Heart right ventricle (tissue), 16 donors: ENCODE measurements at regions of chr4 and their contacts with region 1.

Region 1: GRCh38 chr4:139665690-139666529 is at the start of gene MGST2:
- DNase-seq: peak; percentile 80 to 85
- ATAC-seq: peak; percentile 87 to 96 (median 94)
- H3K4me3 ChIP-seq: peak within 1 kb of the TSS; percentile 27 to 68 (median 58)
- H3K27ac ChIP-seq: peak within 1 kb of the TSS; percentile 74 to 95 (median 92)
- H3K4me1 ChIP-seq: peaks cover 0 to 70% (median 46%) of the 10 kb centered on the region in 9 donors
- H3K27me3 ChIP-seq: no peaks in the 10 kb centered on the region
- CTCF ChIP-seq: peak in 1 of 9 donors; percentile 7
- total RNA-seq, gene MGST2: 99.1 to 125 (median 107) TPM

Region 2: GRCh38 chr4:139511320-139511719 is 154.6 kb before region 1 on chr4:
- intact Hi-C with region 1: no loop called
- DNase-seq: no peak
- ATAC-seq: peak in 2 of 8 donors; percentile 29 to 45
- H3K4me3 ChIP-seq: no peak overlapping the region
- H3K27ac ChIP-seq: no peak overlapping the region
- H3K4me1 ChIP-seq: peaks cover 0 to 46% (median 29%) of the 10 kb centered on the region in 9 donors
- H3K27me3 ChIP-seq: no peaks in the 10 kb centered on the region
- CTCF ChIP-seq: no peak

Region 3: GRCh38 chr4:139711461-139711860 is 45.6 kb after region 1 on chr4:
- intact Hi-C with region 1: loop called in 1 of 10 experiments (anchors 10 kb)
- DNase-seq: no peak
- ATAC-seq: peak in 1 of 8 donors; percentile 43
- H3K4me3 ChIP-seq: no peak overlapping the region
- H3K27ac ChIP-seq: peak overlapping the region in 5 of 10 donors; percentile 16 to 70 (median 40)
- H3K4me1 ChIP-seq: peaks cover 0 to 56% (median 27%) of the 10 kb centered on the region in 9 donors
- H3K27me3 ChIP-seq: no peaks in the 10 kb centered on the region
- CTCF ChIP-seq: no peak

Region 4: GRCh38 chr4:139746431-139747171 is 80.7 kb after region 1 on chr4:
- intact Hi-C with region 1: no loop called
- DNase-seq: no peak
- ATAC-seq: no peak
- H3K4me3 ChIP-seq: no peak overlapping the region
- H3K27ac ChIP-seq: no peak overlapping the region
- H3K4me1 ChIP-seq: peaks cover 0 to 10% (median 2%) of the 10 kb centered on the region in 9 donors
- H3K27me3 ChIP-seq: no peaks in the 10 kb centered on the region
- CTCF ChIP-seq: no peak